Gastrocnemius medialis (tissue), 4 donors: ENCODE measurements at regions of chr19 and their contacts with region 1.

Region 1: GRCh38 chr19:19192078-19192882 is at the starts of genes BORCS8 and RFXANK:
- DNase-seq: peak; percentile 99 to 100
- ATAC-seq: peak; percentile 98 to 100
- H3K4me3 ChIP-seq: peak within 1 kb of the TSS; percentile 83 to 99 (median 92)
- H3K27ac ChIP-seq: peak within 1 kb of the TSS; percentile 99 to 100 (median 100)
- H3K4me1 ChIP-seq: peaks cover 30 to 44% of the 10 kb centered on the region in 2 donors
- H3K27me3 ChIP-seq: no peaks in the 10 kb centered on the region
- CTCF ChIP-seq: peak in 2 of 5 experiments; percentile 9 to 18
- POLR2A ChIP-seq: peak; percentile 67 to 79
- total RNA-seq, gene BORCS8: 11.2 to 17.2 (median 13.3) TPM
- total RNA-seq, gene RFXANK: 25.5 to 44.1 (median 35.1) TPM

Region 2: GRCh38 chr19:18932216-18932841 is 260.0 kb before region 1 on chr19:
- in situ Hi-C with region 1: no loop called
- intact Hi-C with region 1: no loop called
- DNase-seq: peak; percentile 47 to 69
- ATAC-seq: peak; percentile 48 to 65
- H3K4me3 ChIP-seq: no peak overlapping the region
- H3K27ac ChIP-seq: peak overlapping the region in 2 of 4 donors; percentile 31 to 56
- H3K4me1 ChIP-seq: no peaks in the 10 kb centered on the region
- H3K27me3 ChIP-seq: no peaks in the 10 kb centered on the region
- CTCF ChIP-seq: no peak
- POLR2A ChIP-seq: no peak

Region 3: GRCh38 chr19:19063183-19064097 is 128.8 kb before region 1 on chr19 and contains the start of gene SLC25A42:
- in situ Hi-C with region 1: no loop called
- intact Hi-C with region 1: loop called (anchors 2 kb)
- DNase-seq: peak; percentile 99 to 100
- ATAC-seq: peak; percentile 71 to 84
- H3K4me3 ChIP-seq: peak within 1 kb of the TSS; percentile 70 to 85 (median 78)
- H3K27ac ChIP-seq: peak within 1 kb of the TSS; percentile 94 to 96 (median 94)
- H3K4me1 ChIP-seq: peaks cover 78% of the 10 kb centered on the region in 2 donors
- H3K27me3 ChIP-seq: no peaks in the 10 kb centered on the region
- CTCF ChIP-seq: peak in 1 of 5 experiments; percentile 10
- POLR2A ChIP-seq: peak; percentile 96 to 97
- total RNA-seq, gene SLC25A42: 12.3 to 85.3 (median 37.1) TPM

Region 4: DNA sequence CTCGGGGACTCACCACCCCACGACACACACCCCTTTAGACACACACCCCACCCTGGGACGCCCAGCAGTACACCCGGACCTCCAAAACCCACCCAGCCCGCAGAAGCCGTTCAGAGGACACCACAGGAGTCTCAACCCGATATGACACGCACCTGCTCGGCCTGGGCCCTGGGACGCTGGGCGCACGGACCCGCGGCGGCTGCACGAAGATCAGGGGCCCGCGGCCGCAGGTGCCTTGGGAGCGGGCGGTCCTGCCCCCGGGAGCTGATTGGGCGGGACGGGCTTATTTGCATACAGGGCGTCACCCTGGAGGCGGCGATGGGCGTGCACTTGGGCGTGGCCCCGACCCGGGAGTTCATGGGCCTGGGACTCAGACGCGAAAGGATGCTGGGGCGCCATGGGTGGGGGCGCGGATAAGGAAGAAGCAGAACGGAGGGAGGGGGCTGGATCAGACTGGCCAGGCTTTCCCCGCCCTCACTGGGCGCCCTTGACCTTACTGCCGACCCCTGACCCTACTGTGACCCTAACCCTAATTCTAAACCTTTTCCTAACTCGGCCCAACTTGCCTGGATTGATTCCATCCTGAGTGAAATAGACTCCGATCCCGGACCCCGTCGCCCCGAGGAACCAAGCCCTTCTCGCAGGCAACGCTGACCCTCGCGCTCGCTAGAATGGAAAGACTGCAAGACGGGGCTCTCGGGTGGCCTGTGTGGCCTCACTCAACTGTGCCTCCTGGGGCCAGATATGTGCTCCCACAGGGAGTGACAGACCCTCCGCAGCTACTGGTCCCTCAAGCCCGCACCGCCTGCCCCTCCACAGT is 22.0 kb before region 1 on chr19 and contains the start of gene MEF2B:
- in situ Hi-C with region 1: no loop called
- intact Hi-C with region 1: no loop called
- DNase-seq: peak; percentile 67 to 80
- ATAC-seq: peak; percentile 73 to 81
- H3K4me3 ChIP-seq: peak within 1 kb of the TSS; percentile 45 to 55 (median 52)
- H3K27ac ChIP-seq: peak within 1 kb of the TSS in 2 of 4 donors; percentile 14 to 15
- H3K4me1 ChIP-seq: peaks cover 19 to 26% of the 10 kb centered on the region in 2 donors
- H3K27me3 ChIP-seq: no peaks in the 10 kb centered on the region
- CTCF ChIP-seq: no peak
- POLR2A ChIP-seq: no peak
- total RNA-seq, gene MEF2B: 0.68 to 1.6 TPM in 2 of 4 donors, not detected in the others

Region 5: DNA sequence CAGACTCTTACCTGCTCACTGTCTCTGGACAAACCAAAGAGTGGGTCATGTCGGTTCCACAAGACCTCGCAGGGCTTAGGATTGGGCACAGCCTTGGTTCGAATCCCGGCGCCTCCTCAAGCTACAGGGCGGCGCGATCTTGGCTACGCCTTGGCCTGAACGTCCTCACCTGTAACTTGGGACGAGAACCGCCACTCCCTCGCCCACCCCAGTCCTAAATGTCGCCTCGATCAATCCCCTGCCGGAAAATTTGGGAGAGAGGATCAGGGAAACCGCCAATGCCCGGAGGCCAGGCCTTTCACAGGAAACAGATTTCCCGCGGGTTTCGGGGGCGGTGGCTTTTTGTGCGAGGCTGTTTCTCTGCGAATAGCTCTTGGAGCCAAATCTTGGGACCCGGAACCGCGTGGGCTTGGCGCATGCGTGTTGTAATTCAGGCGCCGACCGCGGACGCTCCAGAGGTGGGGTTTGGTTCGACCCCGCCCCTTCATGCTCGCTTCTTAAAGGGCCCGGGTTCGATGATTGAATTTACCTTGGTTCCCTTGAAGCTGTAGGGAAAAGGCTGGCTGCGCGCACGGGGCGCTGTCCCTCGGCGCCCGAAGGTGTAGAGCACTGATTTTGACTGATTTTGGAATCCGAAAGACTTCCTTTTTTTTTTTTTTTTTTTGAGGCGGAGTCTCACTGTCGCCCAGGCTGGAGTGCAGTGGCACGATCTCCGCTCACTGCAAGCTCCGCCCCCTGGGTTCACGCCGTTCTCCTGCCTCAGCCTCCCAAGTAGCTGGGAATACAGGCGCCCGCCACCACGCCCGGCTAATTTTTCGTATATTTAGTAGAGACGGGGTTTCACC is 11.0 kb after region 1 on chr19 and contains the start of gene NR2C2AP:
- in situ Hi-C with region 1: no loop called
- intact Hi-C with region 1: loop called (anchors 1 kb)
- DNase-seq: peak; percentile 85 to 87
- ATAC-seq: peak; percentile 95 to 97
- H3K4me3 ChIP-seq: peak within 1 kb of the TSS; percentile 55 to 82 (median 77)
- H3K27ac ChIP-seq: peak within 1 kb of the TSS; percentile 84 to 91 (median 88)
- H3K4me1 ChIP-seq: peaks cover 6 to 9% of the 10 kb centered on the region in 2 donors
- H3K27me3 ChIP-seq: peaks cover 0 to 5% (median 3%) of the 10 kb centered on the region in 3 donors
- CTCF ChIP-seq: no peak
- POLR2A ChIP-seq: no peak
- total RNA-seq, gene NR2C2AP: 4.7 to 19.0 (median 11.5) TPM

Region 6: GRCh38 chr19:19320362-19321142 is 128.3 kb after region 1 on chr19 and contains the starts of genes MAU2 and SUGP1:
- in situ Hi-C with region 1: no loop called
- intact Hi-C with region 1: loop called (anchors 2 kb)
- DNase-seq: peak; percentile 83 to 87
- ATAC-seq: peak; percentile 88 to 97
- H3K4me3 ChIP-seq: peak within 1 kb of the TSS; percentile 80 to 96 (median 93)
- H3K27ac ChIP-seq: peak within 1 kb of the TSS; percentile 88 to 98 (median 92)
- H3K4me1 ChIP-seq: peaks cover 48 to 57% of the 10 kb centered on the region in 2 donors
- H3K27me3 ChIP-seq: no peaks in the 10 kb centered on the region
- CTCF ChIP-seq: peak in 4 of 5 experiments; percentile 43 to 62 (median 48)
- POLR2A ChIP-seq: peak; percentile 28 to 75
- total RNA-seq, gene MAU2: 31.3 to 48.5 (median 41.7) TPM
- total RNA-seq, gene SUGP1: 29.7 to 51.0 (median 39.8) TPM

Region 7: DNA sequence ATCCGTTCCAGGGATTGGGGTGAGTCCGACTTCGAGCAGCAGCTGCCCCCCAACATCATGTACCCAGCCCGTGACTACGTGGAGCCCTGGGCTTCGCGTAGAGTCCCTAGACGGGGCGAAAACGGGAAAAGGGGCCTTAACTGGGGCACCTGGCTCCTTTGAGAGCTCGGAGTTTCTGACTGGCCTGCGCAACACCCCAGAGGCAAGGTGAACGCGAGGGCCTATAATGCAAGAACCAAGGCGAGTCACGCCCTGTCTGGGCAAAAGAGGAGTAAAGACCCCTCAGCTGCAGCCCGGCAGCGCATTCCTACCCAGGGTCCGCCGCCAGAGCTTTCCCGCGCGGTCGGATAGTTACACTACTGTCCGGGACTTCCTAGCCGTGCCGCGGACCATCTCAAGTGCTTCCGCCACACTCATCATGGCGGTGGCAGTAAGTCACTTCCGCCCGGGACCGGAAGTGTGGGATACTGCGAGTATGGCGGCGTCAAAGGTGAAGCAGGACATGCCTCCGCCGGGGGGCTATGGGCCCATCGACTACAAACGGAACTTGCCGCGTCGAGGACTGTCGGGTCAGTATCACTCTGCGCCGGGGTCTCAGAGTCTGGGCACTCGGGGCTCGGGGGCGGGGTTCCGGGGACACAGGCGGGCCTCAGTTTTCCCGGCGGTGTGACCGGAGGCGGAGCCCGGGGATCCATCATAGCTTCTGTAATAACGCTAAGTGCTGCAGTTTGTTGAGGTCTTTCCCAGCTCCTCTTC is 323.7 kb after region 1 on chr19 and contains the start of gene NDUFA13:
- in situ Hi-C with region 1: no loop called
- intact Hi-C with region 1: loop called (anchors 1 kb)
- DNase-seq: peak; percentile 79 to 91
- ATAC-seq: peak; percentile 96 to 97
- H3K4me3 ChIP-seq: peak within 1 kb of the TSS; percentile 76 to 94 (median 92)
- H3K27ac ChIP-seq: peak within 1 kb of the TSS; percentile 87 to 94 (median 90)
- H3K4me1 ChIP-seq: peaks cover 20 to 34% of the 10 kb centered on the region in 2 donors
- H3K27me3 ChIP-seq: no peaks in the 10 kb centered on the region
- CTCF ChIP-seq: no peak
- POLR2A ChIP-seq: peak; percentile 58 to 70
- total RNA-seq, gene NDUFA13: 41.8 to 201 (median 50.5) TPM